ENCODE measurements at regions of chr11 and their contacts with region 1.

Region 1: DNA sequence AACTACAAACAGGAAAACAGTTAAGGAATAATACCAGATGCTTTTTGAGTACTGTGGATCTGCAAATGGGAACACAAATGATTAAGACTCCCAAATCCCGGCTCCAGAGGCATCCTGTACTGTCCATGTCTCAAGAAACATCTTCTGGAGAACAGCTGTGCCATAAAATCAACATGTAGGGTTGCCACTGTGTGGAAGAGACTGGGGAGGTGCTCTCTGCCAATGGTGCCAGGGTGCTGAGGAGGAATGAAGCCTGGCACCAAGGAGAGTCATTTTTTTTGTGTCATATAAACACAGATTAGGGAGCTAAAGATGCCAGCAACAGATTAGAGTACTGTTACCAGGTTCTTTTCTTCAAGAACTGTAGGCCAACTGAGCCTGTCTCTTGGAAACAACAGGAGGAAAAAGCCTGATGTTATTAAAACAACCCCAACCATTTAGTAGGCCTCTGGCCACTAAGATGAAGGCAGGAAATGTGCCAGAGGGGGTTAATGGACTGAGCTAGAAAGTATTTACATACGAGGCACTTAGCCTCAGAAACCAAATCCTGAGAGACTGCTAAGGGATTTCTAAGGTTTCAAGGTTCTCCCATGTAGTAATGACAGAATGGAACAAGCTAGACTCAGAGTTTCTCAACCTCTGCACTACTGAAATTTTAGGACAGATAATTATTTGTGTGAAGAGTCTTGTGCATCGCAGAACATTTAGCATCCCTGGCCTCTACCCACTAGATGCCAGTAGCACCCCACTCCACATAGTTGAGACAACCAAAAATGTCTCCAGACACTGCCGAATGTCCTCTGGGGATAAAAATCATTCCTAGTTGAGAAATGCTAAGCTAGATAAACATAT is 54.6 kb upstream of the CHRM4 start:
- DNase-seq: no peak
- CTCF ChIP-seq: peak; percentile 38

Region 2: GRCh38 chr11:46315033-46315738 is 131.0 kb before region 1 on chr11:
- CTCF ChIA-PET with region 1: no interaction called
- POLR2A ChIA-PET with region 1: no interaction called
- DNase-seq: peak; percentile 84
- CTCF ChIP-seq: peak; percentile 88

Region 3: DNA sequence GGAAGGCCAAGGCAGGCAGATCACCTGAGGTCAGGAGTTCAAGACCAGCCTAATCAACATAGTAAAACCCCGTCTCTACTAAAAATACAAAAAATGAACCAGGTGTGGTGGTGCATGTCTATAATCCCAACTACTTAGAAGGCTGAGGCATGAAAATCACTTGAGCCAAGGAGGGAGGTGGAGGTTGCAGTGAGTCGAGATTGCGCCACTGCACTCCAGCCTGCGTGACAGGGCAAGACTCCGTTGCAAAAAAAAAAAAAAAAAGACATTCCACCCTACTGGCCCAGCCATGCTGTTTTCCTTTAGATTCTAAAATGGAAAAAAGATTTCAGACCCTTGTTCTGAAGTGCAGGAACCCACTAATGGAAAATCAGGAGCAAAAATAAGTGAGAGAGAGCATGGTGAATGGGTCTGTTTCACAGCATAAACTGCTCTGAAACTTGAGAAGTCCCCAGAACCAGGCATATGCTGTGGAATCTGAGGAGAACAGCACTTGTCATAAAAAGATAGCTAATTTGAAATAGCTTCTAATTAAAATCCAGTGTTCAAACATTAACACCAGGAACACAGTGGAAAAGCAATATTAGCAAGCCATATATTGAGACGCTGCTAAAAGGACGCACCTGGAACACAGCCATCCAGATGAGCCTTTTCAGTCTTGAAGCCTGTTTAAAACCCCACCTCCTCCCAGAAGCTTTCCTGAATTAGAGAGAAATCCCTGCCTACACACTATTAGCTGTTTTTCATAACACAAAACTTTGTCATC is 11.7 kb after region 1 on chr11:
- CTCF ChIA-PET with region 1: interaction called, 13 read pairs
- POLR2A ChIA-PET with region 1: no interaction called
- DNase-seq: no peak
- CTCF ChIP-seq: no peak

Region 4: GRCh38 chr11:46649180-46649738 is 203.1 kb after region 1 on chr11:
- CTCF ChIA-PET with region 1: no interaction called
- POLR2A ChIA-PET with region 1: interaction called, 11 read pairs
- DNase-seq: no peak
- CTCF ChIP-seq: no peak

Measured in GM10248 (cell line).